PC-9 (cell line): ENCODE measurements at regions of chr3 and their contacts with region 1.

Region 1: DNA sequence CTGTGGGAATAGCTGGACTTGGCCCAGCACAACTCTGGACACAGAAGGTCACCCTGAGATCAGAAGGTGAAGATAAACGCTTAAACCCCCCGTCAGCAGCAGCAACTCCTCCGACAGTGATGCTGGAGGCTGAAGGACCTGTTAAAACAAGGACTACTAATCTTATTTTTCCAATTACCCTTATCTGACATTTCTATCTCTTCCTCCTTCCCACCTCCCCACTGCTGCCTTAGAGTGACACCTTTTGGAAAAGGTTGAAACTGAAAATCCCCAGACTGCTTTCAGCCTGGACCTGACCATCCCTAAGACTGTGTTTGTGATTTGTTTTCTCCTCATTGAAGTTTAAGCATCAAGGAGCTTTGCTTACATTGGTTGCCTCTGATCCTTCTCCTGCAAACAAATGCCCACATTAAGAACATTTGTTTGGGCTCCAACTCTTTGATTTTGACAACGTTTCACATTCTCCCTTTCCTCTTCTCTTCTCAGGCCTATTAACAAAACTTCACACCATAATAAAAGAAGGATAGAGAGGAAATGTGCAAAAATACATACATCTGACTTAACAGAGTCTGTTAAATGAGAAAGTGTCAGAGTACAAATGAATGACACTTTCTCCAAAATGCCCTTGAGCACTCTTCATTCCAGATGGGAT is 410.6 kb upstream of the WNT5A start:
- DNase-seq: peak; percentile 20 to 45
- H3K4me3 ChIP-seq: no peak overlapping the region
- H3K27ac ChIP-seq: no peak overlapping the region
- H3K4me1 ChIP-seq: peaks cover 9% of the 10 kb centered on the region; the same call in 1 of the 2 replicates
- H3K27me3 ChIP-seq: no peaks in the 10 kb centered on the region
- CTCF ChIP-seq: peak; percentile 78

Region 2: GRCh38 chr3:54853573-54854404 is 1043.9 kb before region 1 on chr3:
- CTCF ChIA-PET with region 1: no interaction called
- POLR2A ChIA-PET with region 1: no interaction called
- intact Hi-C with region 1: loop called (anchors 1 kb)
- DNase-seq: peak in 1 of 2 experiments; percentile 67
- H3K4me3 ChIP-seq: no peak overlapping the region
- H3K27ac ChIP-seq: no peak overlapping the region
- H3K4me1 ChIP-seq: no peaks in the 10 kb centered on the region
- H3K27me3 ChIP-seq: no peaks in the 10 kb centered on the region
- CTCF ChIP-seq: peak; percentile 93

Region 3: GRCh38 chr3:55571913-55572312 is 325.8 kb before region 1 on chr3:
- CTCF ChIA-PET with region 1: no interaction called
- POLR2A ChIA-PET with region 1: no interaction called
- intact Hi-C with region 1: loop called (anchors 1 kb)
- DNase-seq: peak in 1 of 2 experiments; percentile 87
- H3K4me3 ChIP-seq: no peak overlapping the region
- H3K27ac ChIP-seq: no peak overlapping the region
- H3K4me1 ChIP-seq: peaks cover 19% of the 10 kb centered on the region
- H3K27me3 ChIP-seq: no peaks in the 10 kb centered on the region
- CTCF ChIP-seq: no peak

Region 4: DNA sequence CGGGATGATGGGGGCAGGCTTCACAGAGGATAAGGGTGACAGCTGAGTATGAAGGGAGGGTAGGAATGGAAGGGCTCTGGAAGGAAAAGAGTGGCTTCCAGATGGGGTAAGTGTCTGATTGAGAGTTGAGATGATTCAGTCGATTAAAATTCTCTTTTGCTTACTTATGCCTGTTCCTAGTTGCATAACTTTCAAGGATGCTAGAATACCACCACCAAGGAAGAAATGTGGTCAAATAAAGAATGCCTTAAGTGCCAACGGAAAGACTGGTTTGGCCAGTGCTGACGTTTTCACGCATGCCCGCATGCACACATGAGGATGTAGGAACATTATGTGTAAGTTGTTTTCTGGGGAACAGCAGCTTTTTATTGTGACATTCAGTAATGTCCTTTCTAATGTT is 147.2 kb before region 1 on chr3:
- CTCF ChIA-PET with region 1: no interaction called
- POLR2A ChIA-PET with region 1: no interaction called
- intact Hi-C with region 1: loop called (anchors 1 kb)
- DNase-seq: peak; percentile 75 to 97
- H3K4me3 ChIP-seq: no peak overlapping the region
- H3K27ac ChIP-seq: peak overlapping the region; percentile 74
- H3K4me1 ChIP-seq: peaks cover 20% of the 10 kb centered on the region
- H3K27me3 ChIP-seq: no peaks in the 10 kb centered on the region
- CTCF ChIP-seq: no peak

Region 5: GRCh38 chr3:56251343-56251945 is 353.7 kb after region 1 on chr3:
- CTCF ChIA-PET with region 1: no interaction called
- POLR2A ChIA-PET with region 1: no interaction called
- intact Hi-C with region 1: loop called (anchors 5 kb)
- DNase-seq: peak in 1 of 2 experiments; percentile 18
- H3K4me3 ChIP-seq: no peak overlapping the region
- H3K27ac ChIP-seq: no peak overlapping the region
- H3K4me1 ChIP-seq: no peaks in the 10 kb centered on the region
- H3K27me3 ChIP-seq: 0 out of 2 replicates have a peak, but pooled peaks cover 4% of the 10 kb centered on the region
- CTCF ChIP-seq: peak; percentile 77